CD4-positive, alpha-beta T cell (primary cell): ENCODE measurements at regions of chr12 and their contacts with region 1.

Region 1: DNA sequence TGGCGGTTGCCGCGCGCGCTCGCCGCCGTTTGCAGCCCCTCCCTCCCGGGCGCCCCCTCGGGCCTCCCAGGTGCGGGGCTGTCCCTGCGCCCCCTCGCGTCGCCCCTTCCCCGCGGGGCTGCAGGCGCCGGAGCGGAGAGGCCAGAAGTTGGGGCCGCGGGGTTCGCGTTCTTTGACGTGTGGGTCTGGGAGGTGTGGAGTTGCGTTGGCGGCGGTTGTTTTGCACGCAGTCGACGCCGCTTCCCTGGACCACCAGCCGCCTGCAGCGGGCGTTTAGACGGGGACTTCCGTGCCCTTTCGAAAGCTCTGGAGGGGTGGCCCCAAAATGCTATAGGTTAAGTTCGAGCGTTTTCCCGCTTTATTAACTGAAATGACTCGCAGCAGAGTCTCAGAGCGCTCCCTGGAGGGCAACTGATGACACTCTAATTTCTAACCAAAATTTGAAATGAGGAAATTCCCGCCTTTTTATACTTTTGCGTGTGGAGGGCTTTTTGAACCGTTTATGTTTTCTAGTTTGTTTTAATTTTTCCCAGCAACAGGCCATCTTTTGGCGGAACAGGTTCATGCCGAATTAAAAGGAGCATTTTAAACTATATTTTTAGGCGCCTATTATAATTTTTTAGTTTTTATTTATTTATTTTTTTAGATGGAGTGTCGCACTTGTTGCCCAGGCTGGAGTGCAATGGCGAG is 939 bp downstream of the TMPO start:
- DNase-seq: peak; percentile 58 to 95 (median 73)
- ATAC-seq: peak; percentile 63
- H3K4me3 ChIP-seq: peak overlapping the region; percentile 92
- H3K4me3 Mint-ChIP-seq: peak overlapping the region; percentile 98
- H3K27ac ChIP-seq: peak overlapping the region; percentile 46 to 97
- H3K27ac Mint-ChIP-seq: peak overlapping the region; percentile 98
- H3K4me1 ChIP-seq: peaks cover 35% of the 10 kb centered on the region
- H3K4me1 Mint-ChIP-seq: peaks cover 65% of the 10 kb centered on the region
- H3K27me3 ChIP-seq: no peaks in the 10 kb centered on the region
- H3K27me3 Mint-ChIP-seq: no peaks in the 10 kb centered on the region
- CTCF ChIP-seq: peak; percentile 86

Region 2: GRCh38 chr12:97417568-97418218 is 1098.6 kb before region 1 on chr12:
- CTCF ChIA-PET with region 1: no interaction called
- POLR2A ChIA-PET with region 1: no interaction called
- intact Hi-C with region 1: no loop called
- DNase-seq: no peak
- ATAC-seq: no peak
- H3K4me3 ChIP-seq: no peak overlapping the region
- H3K4me3 Mint-ChIP-seq: no peak overlapping the region
- H3K27ac ChIP-seq: no peak overlapping the region
- H3K27ac Mint-ChIP-seq: no peak overlapping the region
- H3K4me1 ChIP-seq: no peaks in the 10 kb centered on the region
- H3K4me1 Mint-ChIP-seq: no peaks in the 10 kb centered on the region
- H3K27me3 ChIP-seq: no peaks in the 10 kb centered on the region
- H3K27me3 Mint-ChIP-seq: no peaks in the 10 kb centered on the region
- CTCF ChIP-seq: no peak

Region 3: GRCh38 chr12:98490501-98491453 is 25.6 kb before region 1 on chr12:
- CTCF ChIA-PET with region 1: interaction called, 117 read pairs
- POLR2A ChIA-PET with region 1: interaction called, 137 read pairs
- intact Hi-C with region 1: loop called (anchors 1 kb)
- DNase-seq: peak; percentile 64 to 91 (median 82)
- ATAC-seq: peak; percentile 97
- H3K4me3 ChIP-seq: no peak overlapping the region
- H3K4me3 Mint-ChIP-seq: no peak overlapping the region
- H3K27ac ChIP-seq: peak overlapping the region in 1 of 2 donors; percentile 31
- H3K27ac Mint-ChIP-seq: peak overlapping the region; percentile 72
- H3K4me1 ChIP-seq: peaks cover 9% of the 10 kb centered on the region
- H3K4me1 Mint-ChIP-seq: peaks cover 6% of the 10 kb centered on the region
- H3K27me3 ChIP-seq: no peaks in the 10 kb centered on the region
- H3K27me3 Mint-ChIP-seq: no peaks in the 10 kb centered on the region
- CTCF ChIP-seq: peak; percentile 85

Region 4: GRCh38 chr12:98532681-98533304 is 16.5 kb after region 1 on chr12:
- CTCF ChIA-PET with region 1: interaction called, 12 read pairs
- POLR2A ChIA-PET with region 1: interaction called, 5 read pairs
- intact Hi-C with region 1: no loop called
- DNase-seq: peak in 3 of 14 experiments; percentile 60 to 72 (median 70)
- ATAC-seq: peak; percentile 60
- H3K4me3 ChIP-seq: no peak overlapping the region
- H3K4me3 Mint-ChIP-seq: no peak overlapping the region
- H3K27ac ChIP-seq: no peak overlapping the region
- H3K27ac Mint-ChIP-seq: peak overlapping the region; percentile 15
- H3K4me1 ChIP-seq: no peaks in the 10 kb centered on the region
- H3K4me1 Mint-ChIP-seq: peaks cover 22% of the 10 kb centered on the region
- H3K27me3 ChIP-seq: no peaks in the 10 kb centered on the region
- H3K27me3 Mint-ChIP-seq: no peaks in the 10 kb centered on the region
- CTCF ChIP-seq: peak; percentile 75

Region 5: GRCh38 chr12:98644711-98645402 is 128.5 kb after region 1 on chr12 and contains the starts of genes APAF1 and IKBIP:
- CTCF ChIA-PET with region 1: interaction called, 3 read pairs
- POLR2A ChIA-PET with region 1: interaction called, 15 read pairs
- intact Hi-C with region 1: loop called (anchors 5 kb)
- DNase-seq: peak; percentile 91 to 98 (median 97)
- ATAC-seq: peak; percentile 91
- H3K4me3 ChIP-seq: peak within 1 kb of the TSS; percentile 89
- H3K4me3 Mint-ChIP-seq: peak within 1 kb of the TSS; percentile 99
- H3K27ac ChIP-seq: peak within 1 kb of the TSS; percentile 55 to 71
- H3K27ac Mint-ChIP-seq: peak within 1 kb of the TSS; percentile 91
- H3K4me1 ChIP-seq: peaks cover 22% of the 10 kb centered on the region
- H3K4me1 Mint-ChIP-seq: peaks cover 32% of the 10 kb centered on the region
- H3K27me3 ChIP-seq: no peaks in the 10 kb centered on the region
- H3K27me3 Mint-ChIP-seq: no peaks in the 10 kb centered on the region
- CTCF ChIP-seq: no peak
- total RNA-seq, gene APAF1: 13.5 to 14.5 TPM
- total RNA-seq, gene IKBIP: 0.56 to 0.82 TPM

Region 6: GRCh38 chr12:100142851-100143559 is 1626.7 kb after region 1 on chr12 and contains the start of gene BLTP3B:
- CTCF ChIA-PET with region 1: no interaction called
- POLR2A ChIA-PET with region 1: no interaction called
- intact Hi-C with region 1: loop called in 1 of 2 experiments (anchors 10 kb)
- DNase-seq: peak; percentile 78 to 96 (median 90)
- ATAC-seq: peak; percentile 94
- H3K4me3 ChIP-seq: peak within 1 kb of the TSS; percentile 90
- H3K4me3 Mint-ChIP-seq: peak within 1 kb of the TSS; percentile 97
- H3K27ac ChIP-seq: peak within 1 kb of the TSS; percentile 86 to 89
- H3K27ac Mint-ChIP-seq: peak within 1 kb of the TSS; percentile 84
- H3K4me1 ChIP-seq: peaks cover 20% of the 10 kb centered on the region
- H3K4me1 Mint-ChIP-seq: peaks cover 44% of the 10 kb centered on the region
- H3K27me3 ChIP-seq: no peaks in the 10 kb centered on the region
- H3K27me3 Mint-ChIP-seq: no peaks in the 10 kb centered on the region
- CTCF ChIP-seq: no peak
- total RNA-seq, gene BLTP3B: 23.0 to 23.4 TPM